Right cardiac atrium (tissue), 5 donors: ENCODE measurements at regions of chr2 and their contacts with region 1.

Region 1: DNA sequence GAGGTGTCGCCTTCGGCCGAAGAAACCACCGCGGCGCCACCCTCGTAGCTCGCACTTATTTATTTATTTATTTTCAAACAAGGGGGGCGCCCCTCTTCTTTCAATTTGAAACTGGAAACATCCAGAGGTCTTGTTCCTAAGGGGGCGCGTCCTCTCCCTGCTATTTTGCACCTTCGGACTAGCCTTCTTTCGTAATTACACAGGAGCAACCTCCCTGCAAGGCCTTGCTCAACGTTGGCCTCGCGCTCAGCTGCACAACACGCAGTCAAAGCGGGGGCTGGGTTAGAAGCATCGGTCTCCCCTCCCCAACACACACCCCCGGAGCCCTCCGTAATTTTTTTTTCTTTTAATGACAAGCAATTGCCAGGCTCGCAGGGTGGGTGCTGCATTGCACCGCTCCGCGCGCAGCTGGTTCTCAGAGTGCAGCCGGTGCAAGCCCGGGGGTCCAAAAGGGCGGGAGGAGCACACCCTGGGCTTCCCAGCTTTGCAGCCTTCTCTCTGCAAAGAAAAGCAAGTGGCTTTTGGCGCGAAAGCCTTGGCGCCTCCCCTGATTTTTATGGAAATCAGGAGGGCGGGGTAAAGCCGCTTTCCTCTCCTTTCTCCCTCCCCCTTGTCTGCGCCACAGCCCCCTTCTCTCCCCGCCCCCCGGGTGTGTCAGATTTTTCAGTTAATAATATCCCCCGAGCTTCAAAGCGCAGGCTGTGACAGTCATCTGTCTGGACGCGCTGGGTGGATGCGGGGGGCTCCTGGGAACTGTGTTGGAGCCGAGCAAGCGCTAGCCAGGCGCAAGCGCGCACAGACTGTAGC is at the start of gene MYCN:
- DNase-seq: peak; percentile 23 to 69 (median 62)
- ATAC-seq: peak; percentile 16 to 30
- H3K4me3 ChIP-seq: peak within 1 kb of the TSS; percentile 31
- H3K27ac ChIP-seq: no peak within 1 kb of the TSS
- H3K4me1 ChIP-seq: no peaks in the 10 kb centered on the region
- H3K27me3 ChIP-seq: no peaks in the 10 kb centered on the region
- total RNA-seq, gene MYCN: 0.23 to 0.42 (median 0.33) TPM

Region 2: GRCh38 chr2:15636972-15637785 is 302.9 kb before region 1 on chr2:
- intact Hi-C with region 1: loop called in 3 of 4 experiments (anchors 5 to 10 kb)
- DNase-seq: peak; percentile 66 to 88 (median 74)
- ATAC-seq: peak; percentile 85 to 86
- H3K4me3 ChIP-seq: no peak overlapping the region
- H3K27ac ChIP-seq: no peak overlapping the region
- H3K4me1 ChIP-seq: no peaks in the 10 kb centered on the region
- H3K27me3 ChIP-seq: no peaks in the 10 kb centered on the region

Region 3: DNA sequence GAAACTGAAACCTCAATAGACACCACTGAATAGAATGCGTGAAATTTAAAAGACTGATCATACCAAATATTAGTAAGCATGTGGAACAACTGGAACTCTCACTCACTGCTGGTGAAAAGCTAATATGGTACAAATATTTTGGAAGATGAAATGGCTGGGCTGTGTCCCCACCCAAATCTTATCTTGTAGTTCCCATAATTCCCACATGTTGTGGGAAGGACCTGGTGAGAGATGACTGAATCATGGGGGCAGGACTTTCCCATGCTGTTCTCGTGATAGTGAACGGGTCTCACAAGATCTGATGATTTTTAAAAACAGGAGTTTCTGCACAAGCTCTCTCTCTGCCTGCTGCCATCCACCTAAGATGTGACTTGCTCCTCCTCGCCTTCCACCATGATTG is 31.7 kb before region 1 on chr2:
- intact Hi-C with region 1: no loop called
- DNase-seq: no peak
- ATAC-seq: no peak
- H3K4me3 ChIP-seq: no peak overlapping the region
- H3K27ac ChIP-seq: no peak overlapping the region
- H3K4me1 ChIP-seq: peaks cover 4% of the 10 kb centered on the region
- H3K27me3 ChIP-seq: no peaks in the 10 kb centered on the region

Region 4: DNA sequence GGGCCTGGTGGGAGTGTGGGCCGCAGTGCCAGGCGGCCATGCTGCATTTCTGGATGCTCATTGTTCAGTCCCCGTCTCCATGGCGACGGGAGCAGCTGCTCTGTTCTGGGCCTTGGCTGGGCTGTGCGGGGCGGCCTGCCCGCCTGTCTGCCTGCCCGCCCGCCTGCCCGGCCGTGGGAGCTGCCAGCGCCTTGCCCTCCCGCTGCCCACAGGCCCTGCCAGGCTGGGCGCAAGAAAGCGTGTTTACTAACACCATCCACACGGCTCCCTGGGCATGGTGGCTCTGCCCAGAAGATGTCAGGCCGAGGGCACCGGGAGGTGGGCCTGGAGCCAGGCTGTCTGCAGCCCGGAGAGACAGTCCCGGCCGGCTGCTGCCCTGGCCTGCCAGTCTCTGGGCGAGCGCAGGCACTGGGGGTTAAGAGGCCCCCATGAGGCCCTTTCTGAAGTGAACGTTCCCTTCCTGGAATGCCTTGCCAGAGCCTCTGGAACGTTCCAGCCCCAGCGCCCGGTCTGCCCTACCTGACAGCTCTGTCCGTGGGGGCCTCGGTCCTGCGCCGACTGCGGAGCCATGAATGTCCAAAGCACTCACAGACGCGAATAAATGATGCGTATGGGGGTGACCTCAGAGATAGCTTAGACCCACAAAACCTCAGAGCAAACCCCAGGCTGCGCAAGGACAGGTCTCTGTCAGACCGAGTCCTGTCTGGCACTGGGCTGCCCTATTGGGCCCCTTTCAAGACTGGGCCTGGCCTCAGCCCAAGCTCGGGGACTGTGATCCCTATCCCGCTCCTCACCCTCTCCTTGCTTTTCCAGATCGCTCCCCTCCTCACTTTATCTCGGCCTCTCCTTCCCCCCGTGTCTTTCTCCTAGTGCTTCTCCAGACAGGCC is 44.6 kb after region 1 on chr2:
- intact Hi-C with region 1: no loop called
- DNase-seq: peak; percentile 37 to 75 (median 74)
- ATAC-seq: peak; percentile 82 to 84
- H3K4me3 ChIP-seq: no peak overlapping the region
- H3K27ac ChIP-seq: no peak overlapping the region
- H3K4me1 ChIP-seq: no peaks in the 10 kb centered on the region
- H3K27me3 ChIP-seq: no peaks in the 10 kb centered on the region

Region 5: GRCh38 chr2:16247326-16248122 is 307.5 kb after region 1 on chr2:
- intact Hi-C with region 1: no loop called
- DNase-seq: no peak
- ATAC-seq: no peak
- H3K4me3 ChIP-seq: no peak overlapping the region
- H3K27ac ChIP-seq: no peak overlapping the region
- H3K4me1 ChIP-seq: no peaks in the 10 kb centered on the region
- H3K27me3 ChIP-seq: no peaks in the 10 kb centered on the region

Region 6: GRCh38 chr2:16281451-16282336 is 341.6 kb after region 1 on chr2:
- intact Hi-C with region 1: loop called in 3 of 4 experiments (anchors 5 to 10 kb)
- DNase-seq: no peak
- ATAC-seq: peak; percentile 69 to 74
- H3K4me3 ChIP-seq: no peak overlapping the region
- H3K27ac ChIP-seq: no peak overlapping the region
- H3K4me1 ChIP-seq: no peaks in the 10 kb centered on the region
- H3K27me3 ChIP-seq: no peaks in the 10 kb centered on the region

Region 7: GRCh38 chr2:16481351-16481750 is 541.3 kb after region 1 on chr2:
- intact Hi-C with region 1: loop called in 2 of 4 experiments (anchors 5 kb)
- DNase-seq: no peak
- ATAC-seq: no peak
- H3K4me3 ChIP-seq: no peak overlapping the region
- H3K27ac ChIP-seq: no peak overlapping the region
- H3K4me1 ChIP-seq: no peaks in the 10 kb centered on the region
- H3K27me3 ChIP-seq: no peaks in the 10 kb centered on the region

Region 8: DNA sequence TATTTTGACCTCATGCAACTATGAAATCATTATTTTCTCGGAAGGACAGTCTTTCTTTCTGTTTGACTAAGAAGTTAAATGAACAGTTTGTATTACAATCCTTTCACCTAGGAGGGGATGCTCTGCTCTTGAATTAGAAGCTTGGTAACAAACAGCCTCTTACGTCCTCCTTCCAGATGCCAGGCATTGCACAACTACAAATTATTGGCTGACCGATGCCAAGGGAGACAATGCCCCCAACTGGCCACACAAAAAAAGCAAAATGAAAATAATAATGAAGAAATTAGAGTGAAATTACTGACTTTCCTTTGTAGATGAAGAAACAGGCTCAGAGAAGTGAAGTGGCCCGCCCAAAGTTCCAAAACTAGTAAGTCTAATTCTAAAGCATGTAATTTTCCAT is 547.6 kb after region 1 on chr2:
- intact Hi-C with region 1: loop called in 2 of 4 experiments (anchors 5 kb)
- DNase-seq: no peak
- ATAC-seq: no peak
- H3K4me3 ChIP-seq: no peak overlapping the region
- H3K27ac ChIP-seq: no peak overlapping the region
- H3K4me1 ChIP-seq: no peaks in the 10 kb centered on the region
- H3K27me3 ChIP-seq: no peaks in the 10 kb centered on the region

Region 9: GRCh38 chr2:16507655-16508489 is 567.8 kb after region 1 on chr2:
- intact Hi-C with region 1: loop called in 3 of 4 experiments (anchors 5 to 10 kb)
- DNase-seq: peak; percentile 34 to 72 (median 67)
- ATAC-seq: peak; percentile 89 to 91
- H3K4me3 ChIP-seq: peak overlapping the region; percentile 52
- H3K27ac ChIP-seq: no peak overlapping the region
- H3K4me1 ChIP-seq: no peaks in the 10 kb centered on the region
- H3K27me3 ChIP-seq: no peaks in the 10 kb centered on the region

Region 10: DNA sequence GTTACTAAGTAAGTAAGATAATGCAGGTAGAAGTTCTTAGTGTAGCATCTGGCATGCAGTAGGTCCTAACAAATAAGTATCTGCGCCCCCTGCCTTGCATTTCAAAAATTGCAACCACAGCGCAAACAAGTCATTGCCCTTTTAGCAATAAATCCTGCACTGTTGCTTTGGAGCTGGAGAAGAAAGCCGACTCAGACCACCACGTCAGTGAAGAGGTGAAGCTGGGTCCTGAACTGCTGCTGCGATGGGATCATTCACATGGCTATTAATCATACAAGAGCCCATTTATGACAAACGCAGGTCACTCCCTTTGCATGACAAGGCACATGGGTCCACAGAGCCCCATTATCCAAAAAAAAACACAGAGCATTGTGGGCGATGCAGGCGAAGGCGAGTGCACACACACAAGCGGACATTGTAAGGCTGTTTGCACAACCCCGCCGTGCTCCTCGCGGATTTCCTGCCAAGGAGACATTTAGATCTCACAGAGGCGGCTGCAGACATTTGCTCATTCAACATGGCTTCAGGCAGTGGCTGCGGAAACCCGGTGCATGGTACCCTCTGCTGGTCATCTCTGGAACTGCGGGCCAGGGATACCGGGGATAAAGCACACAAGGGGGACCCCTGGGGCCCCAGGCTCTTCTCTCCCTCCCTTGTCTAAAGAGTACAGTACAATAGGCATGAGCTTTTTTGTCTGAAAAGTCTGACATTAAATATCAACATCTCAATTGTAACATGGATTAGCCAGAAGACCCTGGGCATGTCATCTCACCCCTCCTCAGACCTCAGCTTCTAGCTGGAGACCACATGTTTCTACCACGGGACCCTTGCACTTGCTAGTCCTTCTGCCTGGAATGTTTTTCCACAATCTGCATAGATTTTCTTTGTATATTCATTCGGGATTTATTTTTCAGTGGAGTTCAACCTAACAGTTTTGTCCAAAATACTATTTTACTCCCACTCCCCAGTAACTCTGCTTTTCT is 668.9 kb after region 1 on chr2:
- intact Hi-C with region 1: loop called in 2 of 4 experiments (anchors 5 to 10 kb)
- DNase-seq: peak; percentile 84 to 92 (median 92)
- ATAC-seq: peak; percentile 91 to 93
- H3K4me3 ChIP-seq: peak overlapping the region; percentile 46
- H3K27ac ChIP-seq: peak overlapping the region; percentile 43
- H3K4me1 ChIP-seq: no peaks in the 10 kb centered on the region
- H3K27me3 ChIP-seq: no peaks in the 10 kb centered on the region